ENCODE measurements at regions of chr5 and their contacts with region 1.

Region 1: GRCh38 chr5:131913603-131914002 is 31.9 kb downstream of the MEIKIN start:
- DNase-seq: no peak
- H3K27ac ChIP-seq: no peak overlapping the region
- CTCF ChIP-seq: no peak

Region 2: DNA sequence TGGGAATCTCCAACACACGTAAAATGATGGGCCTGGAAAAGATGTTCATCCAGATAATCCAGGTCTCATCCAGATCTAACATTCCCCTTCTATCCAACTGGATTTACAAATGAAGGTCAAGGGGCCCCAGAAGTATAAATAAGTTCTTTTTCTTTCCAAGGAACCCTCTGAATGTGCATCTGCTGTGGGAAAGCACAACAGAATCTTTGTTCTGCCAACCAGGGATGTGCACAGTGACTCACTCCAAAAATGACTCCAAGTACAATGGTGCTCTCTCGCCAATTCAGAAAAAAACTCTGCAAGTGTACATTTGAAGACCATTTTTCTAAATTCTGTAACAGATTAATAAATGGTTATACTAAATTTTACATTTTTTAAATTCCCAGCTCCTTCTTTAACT is 291.0 kb before region 1 on chr5:
- CTCF ChIA-PET with region 1: no interaction called
- POLR2A ChIA-PET with region 1: no interaction called
- DNase-seq: no peak
- H3K27ac ChIP-seq: no peak overlapping the region
- CTCF ChIP-seq: no peak

Region 3: DNA sequence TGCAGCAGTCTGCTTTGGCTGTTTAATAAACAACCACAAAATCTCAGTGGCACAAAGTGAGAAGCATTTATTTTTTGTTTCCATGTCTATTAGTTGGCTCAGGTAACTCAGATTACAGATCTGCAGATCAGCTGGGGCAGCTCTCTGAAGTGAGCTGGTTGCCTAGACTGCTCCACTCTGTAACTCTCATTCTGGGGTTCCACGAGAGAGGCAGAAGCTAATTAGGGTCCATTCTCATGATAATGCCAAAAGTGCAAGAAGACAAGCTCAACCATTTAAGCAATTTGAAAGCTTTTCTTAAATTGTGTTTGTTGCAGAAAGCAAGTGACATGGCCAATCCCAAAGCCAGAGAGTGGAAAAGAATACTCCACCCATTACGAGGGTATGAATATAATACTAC is 18.6 kb after region 1 on chr5:
- CTCF ChIA-PET with region 1: interaction called, 12 read pairs
- POLR2A ChIA-PET with region 1: no interaction called
- DNase-seq: no peak
- H3K27ac ChIP-seq: no peak overlapping the region
- CTCF ChIP-seq: no peak